CD4-positive, alpha-beta T cell (primary cell): ENCODE measurements at regions of chr9 and their contacts with region 1.

Region 1: GRCh38 chr9:122092611-122093506 is at the start of gene TTLL11:
- DNase-seq: peak; percentile 93 to 98 (median 96)
- ATAC-seq: peak; percentile 96
- H3K4me3 ChIP-seq: peak within 1 kb of the TSS; percentile 69
- H3K4me3 Mint-ChIP-seq: peak within 1 kb of the TSS; percentile 93
- H3K27ac ChIP-seq: no peak within 1 kb of the TSS
- H3K27ac Mint-ChIP-seq: peak within 1 kb of the TSS; percentile 40
- H3K4me1 ChIP-seq: peaks cover 40% of the 10 kb centered on the region
- H3K4me1 Mint-ChIP-seq: peaks cover 50% of the 10 kb centered on the region
- H3K27me3 ChIP-seq: no peaks in the 10 kb centered on the region
- H3K27me3 Mint-ChIP-seq: no peaks in the 10 kb centered on the region
- CTCF ChIP-seq: no peak
- total RNA-seq, gene TTLL11: 1.6 to 2.3 TPM

Region 2: GRCh38 chr9:120579750-120580590 is 1512.9 kb before region 1 on chr9 and contains the start of gene CDK5RAP2:
- CTCF ChIA-PET with region 1: no interaction called
- POLR2A ChIA-PET with region 1: no interaction called
- intact Hi-C with region 1: loop called in 1 of 2 experiments (anchors 2 kb)
- DNase-seq: peak; percentile 84 to 98 (median 90)
- ATAC-seq: peak; percentile 98
- H3K4me3 ChIP-seq: peak within 1 kb of the TSS; percentile 84
- H3K4me3 Mint-ChIP-seq: peak within 1 kb of the TSS; percentile 99
- H3K27ac ChIP-seq: peak within 1 kb of the TSS; percentile 26 to 55
- H3K27ac Mint-ChIP-seq: peak within 1 kb of the TSS; percentile 92
- H3K4me1 ChIP-seq: peaks cover 29% of the 10 kb centered on the region
- H3K4me1 Mint-ChIP-seq: peaks cover 48% of the 10 kb centered on the region
- H3K27me3 ChIP-seq: no peaks in the 10 kb centered on the region
- H3K27me3 Mint-ChIP-seq: no peaks in the 10 kb centered on the region
- CTCF ChIP-seq: no peak
- total RNA-seq, gene CDK5RAP2: 55.0 to 56.0 TPM

Region 3: DNA sequence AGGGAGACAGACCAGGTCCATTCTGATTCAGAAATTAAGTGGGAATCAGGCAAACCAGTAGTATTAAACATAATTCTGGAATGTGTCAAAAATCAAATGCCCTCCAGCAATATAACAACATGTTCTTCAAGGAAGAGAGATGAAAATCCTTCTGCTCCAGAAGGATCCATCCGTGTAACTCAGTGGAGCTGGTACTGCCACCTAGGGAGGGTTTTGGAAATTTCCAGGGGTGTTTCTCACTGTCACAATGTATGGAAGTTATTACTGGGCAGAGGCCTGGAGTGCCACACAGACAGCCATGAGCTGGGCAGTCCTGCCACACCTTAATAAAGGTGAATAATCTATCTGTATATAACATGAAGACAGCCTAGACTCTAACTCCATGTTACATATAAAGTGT is 87.3 kb before region 1 on chr9:
- CTCF ChIA-PET with region 1: no interaction called
- POLR2A ChIA-PET with region 1: no interaction called
- intact Hi-C with region 1: no loop called
- DNase-seq: no peak
- ATAC-seq: no peak
- H3K4me3 ChIP-seq: no peak overlapping the region
- H3K4me3 Mint-ChIP-seq: no peak overlapping the region
- H3K27ac ChIP-seq: no peak overlapping the region
- H3K27ac Mint-ChIP-seq: no peak overlapping the region
- H3K4me1 ChIP-seq: no peaks in the 10 kb centered on the region
- H3K4me1 Mint-ChIP-seq: no peaks in the 10 kb centered on the region
- H3K27me3 ChIP-seq: no peaks in the 10 kb centered on the region
- H3K27me3 Mint-ChIP-seq: no peaks in the 10 kb centered on the region
- CTCF ChIP-seq: no peak

Region 4: GRCh38 chr9:122264360-122265148 is 171.7 kb after region 1 on chr9 and contains the starts of genes MRRF and RBM18:
- CTCF ChIA-PET with region 1: interaction called, 3 read pairs
- POLR2A ChIA-PET with region 1: interaction called, 5 read pairs
- intact Hi-C with region 1: loop called in 1 of 2 experiments (anchors 2 kb)
- DNase-seq: peak; percentile 73 to 96 (median 82)
- ATAC-seq: peak; percentile 82
- H3K4me3 ChIP-seq: peak within 1 kb of the TSS; percentile 86
- H3K4me3 Mint-ChIP-seq: peak within 1 kb of the TSS; percentile 90
- H3K27ac ChIP-seq: peak within 1 kb of the TSS; percentile 89 to 97
- H3K27ac Mint-ChIP-seq: peak within 1 kb of the TSS; percentile 94
- H3K4me1 ChIP-seq: peaks cover 29% of the 10 kb centered on the region
- H3K4me1 Mint-ChIP-seq: peaks cover 71% of the 10 kb centered on the region
- H3K27me3 ChIP-seq: no peaks in the 10 kb centered on the region
- H3K27me3 Mint-ChIP-seq: no peaks in the 10 kb centered on the region
- CTCF ChIP-seq: no peak
- total RNA-seq, gene MRRF: 18.4 to 18.7 TPM
- total RNA-seq, gene RBM18: 25.9 to 27.0 TPM

Region 5: DNA sequence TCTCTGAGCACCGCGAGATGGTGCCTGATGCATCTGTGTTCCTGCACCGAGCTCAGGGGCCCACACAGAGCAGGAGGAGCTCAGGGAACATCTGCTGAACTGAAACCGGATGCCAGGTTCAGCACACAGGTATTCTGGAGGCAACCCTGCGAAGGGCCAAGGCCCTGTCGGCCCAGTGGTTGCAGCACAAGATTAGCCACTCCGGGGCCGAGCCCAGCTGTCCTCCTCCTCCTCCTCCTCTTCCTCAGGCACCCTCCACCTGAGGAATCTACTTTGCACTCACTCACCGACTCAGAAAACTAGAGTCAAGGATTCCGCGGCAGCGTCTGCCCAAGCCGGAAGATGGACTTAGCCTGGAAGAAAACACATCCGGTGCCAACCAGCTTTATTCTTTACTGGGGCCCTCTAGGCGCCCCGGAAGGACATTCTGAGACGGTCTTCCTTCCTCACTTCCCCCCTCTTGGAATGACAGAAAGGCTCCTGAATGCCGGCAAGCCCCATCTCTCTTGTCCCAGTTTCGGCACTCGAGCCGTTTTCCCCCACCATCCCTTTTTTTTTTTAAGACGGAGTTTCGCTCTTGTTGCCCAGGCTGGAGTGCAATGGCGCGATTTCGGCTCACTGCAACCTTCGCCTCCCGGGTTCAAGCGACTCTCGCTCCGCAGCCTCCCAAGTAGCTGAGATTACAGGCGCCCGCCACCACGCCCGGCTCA is 820.3 kb after region 1 on chr9 and contains the start of gene ZBTB6:
- CTCF ChIA-PET with region 1: no interaction called
- POLR2A ChIA-PET with region 1: no interaction called
- intact Hi-C with region 1: loop called (anchors 10 kb)
- DNase-seq: peak; percentile 52 to 89 (median 64)
- ATAC-seq: peak; percentile 98
- H3K4me3 ChIP-seq: peak within 1 kb of the TSS; percentile 78
- H3K4me3 Mint-ChIP-seq: peak within 1 kb of the TSS; percentile 96
- H3K27ac ChIP-seq: peak within 1 kb of the TSS; percentile 86 to 88
- H3K27ac Mint-ChIP-seq: peak within 1 kb of the TSS; percentile 88
- H3K4me1 ChIP-seq: peaks cover 11% of the 10 kb centered on the region
- H3K4me1 Mint-ChIP-seq: peaks cover 29% of the 10 kb centered on the region
- H3K27me3 ChIP-seq: no peaks in the 10 kb centered on the region
- H3K27me3 Mint-ChIP-seq: no peaks in the 10 kb centered on the region
- CTCF ChIP-seq: no peak
- total RNA-seq, gene ZBTB6: 3.6 to 3.9 TPM

Region 6: GRCh38 chr9:123929870-123930831 is 1837.3 kb after region 1 on chr9 and contains the start of gene DENND1A:
- CTCF ChIA-PET with region 1: no interaction called
- POLR2A ChIA-PET with region 1: no interaction called
- intact Hi-C with region 1: loop called in 1 of 2 experiments (anchors 10 kb)
- DNase-seq: peak; percentile 76 to 94 (median 85)
- ATAC-seq: peak; percentile 91
- H3K4me3 ChIP-seq: peak within 1 kb of the TSS; percentile 77
- H3K4me3 Mint-ChIP-seq: peak within 1 kb of the TSS; percentile 99
- H3K27ac ChIP-seq: peak within 1 kb of the TSS in 1 of 2 donors; percentile 34
- H3K27ac Mint-ChIP-seq: peak within 1 kb of the TSS; percentile 80
- H3K4me1 ChIP-seq: peaks cover 21% of the 10 kb centered on the region
- H3K4me1 Mint-ChIP-seq: peaks cover 36% of the 10 kb centered on the region
- H3K27me3 ChIP-seq: no peaks in the 10 kb centered on the region
- H3K27me3 Mint-ChIP-seq: no peaks in the 10 kb centered on the region
- CTCF ChIP-seq: no peak
- total RNA-seq, gene DENND1A: 20.0 to 20.6 TPM